Adrenal gland (tissue), 19 donors: ENCODE measurements at regions of chr3 and their contacts with region 1.

Region 1: GRCh38 chr3:160837394-160837980 is 81.5 kb downstream of the PPM1L start:
- DNase-seq: no peak
- H3K4me3 ChIP-seq: no peak overlapping the region
- H3K27ac ChIP-seq: no peak overlapping the region
- H3K4me1 ChIP-seq: peaks cover 0 to 5% of the 10 kb centered on the region in 2 donors
- H3K27me3 ChIP-seq: no peaks in the 10 kb centered on the region
- CTCF ChIP-seq: no peak
- POLR2A ChIP-seq: no peak

Region 2: GRCh38 chr3:160825306-160825800 is 12.1 kb before region 1 on chr3:
- intact Hi-C with region 1: loop called in 1 of 2 experiments (anchors 2 kb)
- DNase-seq: no peak
- H3K4me3 ChIP-seq: no peak overlapping the region
- H3K27ac ChIP-seq: no peak overlapping the region
- H3K4me1 ChIP-seq: no peaks in the 10 kb centered on the region
- H3K27me3 ChIP-seq: no peaks in the 10 kb centered on the region
- CTCF ChIP-seq: no peak
- POLR2A ChIP-seq: no peak